ENCODE measurements at regions of chr16 and their contacts with region 1.

Region 1: DNA sequence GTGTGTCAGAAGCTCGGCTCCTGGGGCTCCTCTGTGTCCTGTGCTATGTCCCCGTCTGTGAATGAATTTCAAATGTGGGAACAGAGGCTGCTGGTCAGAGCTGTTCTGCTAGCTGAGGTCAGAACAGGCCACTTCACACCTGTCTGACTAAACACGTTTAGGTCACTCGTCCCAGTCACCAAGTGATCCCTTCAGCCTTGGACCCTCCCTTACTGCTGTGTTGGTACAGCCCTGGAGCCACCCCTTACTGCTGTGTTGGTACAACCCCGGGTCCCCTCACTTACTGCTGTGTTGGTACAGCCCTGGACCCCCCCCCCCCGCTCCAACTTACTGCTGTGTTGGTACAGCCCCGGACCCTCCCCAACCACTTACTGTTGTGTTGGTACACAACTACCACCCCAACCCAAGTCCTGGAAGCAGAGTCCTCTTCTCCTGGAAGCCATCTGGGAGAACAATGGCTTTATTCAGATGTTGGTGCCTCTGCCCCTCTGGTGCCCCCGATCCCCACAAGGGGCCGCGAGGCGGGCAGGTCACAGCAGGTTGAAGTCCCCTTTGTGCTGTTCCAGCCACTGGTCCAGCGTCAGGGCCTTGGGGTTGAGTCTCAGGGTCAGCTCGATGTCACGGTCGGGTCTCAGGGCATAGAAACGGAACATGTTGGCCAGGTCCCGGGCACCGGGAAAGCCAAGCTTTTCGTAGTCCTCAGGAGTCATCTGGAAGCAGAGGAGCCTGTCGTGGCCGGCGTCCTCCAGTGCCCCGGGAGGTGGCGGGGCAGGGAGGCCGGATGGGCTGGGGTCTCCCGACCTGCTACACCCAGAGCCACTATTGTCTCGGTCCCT is 13.0 kb downstream of the NMRAL1 start:
- DNase-seq: peak; percentile 32 to 64 (median 42)
- ATAC-seq: peak; percentile 82
- H3K4me3 ChIP-seq: no peak overlapping the region
- H3K27ac ChIP-seq: no peak overlapping the region
- H3K4me1 ChIP-seq: peaks cover 0 to 18% of the 10 kb centered on the region in 2 experiments; a peak in 2 of 5 replicates
- H3K27me3 ChIP-seq: no peaks in the 10 kb centered on the region
- CTCF ChIP-seq: no peak
- EP300 ChIP-seq: no peak
- POLR2A ChIP-seq: 0 out of 2 replicates have a peak, but pooled peaks have one; percentile 32
- RAD21 ChIP-seq: no peak

Region 2: DNA sequence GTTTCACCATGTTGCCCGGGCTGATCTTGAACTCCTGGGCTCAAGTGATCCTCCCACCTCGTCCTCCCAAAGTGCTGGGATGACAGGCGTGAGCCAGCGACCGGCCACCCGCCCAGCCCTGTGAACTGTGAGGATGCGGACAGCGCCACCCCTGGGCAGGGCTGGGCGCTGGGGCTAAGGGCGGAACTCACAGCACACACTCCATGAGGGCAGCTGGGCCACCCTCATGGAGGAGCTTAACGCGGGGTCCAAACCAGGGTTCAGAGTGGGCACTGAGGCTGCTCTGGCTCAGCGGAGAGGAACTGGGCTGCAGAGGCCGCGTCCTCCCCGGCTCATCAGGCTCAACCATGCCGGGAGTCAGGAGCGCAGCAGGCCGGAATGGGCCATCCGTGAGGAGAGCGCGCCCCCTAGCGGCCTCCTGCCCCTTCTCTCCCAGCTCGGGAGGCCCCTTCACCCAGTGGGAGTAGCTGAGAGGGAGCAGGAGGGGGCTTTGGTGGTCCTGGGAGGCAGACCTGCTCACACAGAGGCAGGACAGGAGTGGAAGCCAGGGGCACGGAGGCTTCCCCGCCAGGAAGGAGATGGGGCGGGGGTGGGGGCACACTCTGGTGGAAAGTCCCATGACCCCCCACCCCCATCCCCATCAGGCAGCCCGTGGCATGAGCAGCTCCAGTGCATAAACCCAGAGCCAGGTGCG is 58.9 kb before region 1 on chr16:
- CTCF ChIA-PET with region 1: no interaction called
- POLR2A ChIA-PET with region 1: no interaction called
- in situ Hi-C with region 1: no loop called
- intact Hi-C with region 1: no loop called
- DNase-seq: peak; percentile 84 to 90 (median 86)
- ATAC-seq: peak; percentile 94
- H3K4me3 ChIP-seq: peak overlapping the region; percentile 25; the same call in 1 of the 2 replicates
- H3K27ac ChIP-seq: no peak overlapping the region; the same call in 2 of the 3 replicates
- H3K4me1 ChIP-seq: peaks cover 0 to 29% of the 10 kb centered on the region in 2 experiments; a peak in 2 of 5 replicates
- H3K27me3 ChIP-seq: no peaks in the 10 kb centered on the region
- CTCF ChIP-seq: peak; percentile 70 to 90 (median 79)
- EP300 ChIP-seq: no peak
- POLR2A ChIP-seq: no peak
- RAD21 ChIP-seq: peak; percentile 91

Region 3: DNA sequence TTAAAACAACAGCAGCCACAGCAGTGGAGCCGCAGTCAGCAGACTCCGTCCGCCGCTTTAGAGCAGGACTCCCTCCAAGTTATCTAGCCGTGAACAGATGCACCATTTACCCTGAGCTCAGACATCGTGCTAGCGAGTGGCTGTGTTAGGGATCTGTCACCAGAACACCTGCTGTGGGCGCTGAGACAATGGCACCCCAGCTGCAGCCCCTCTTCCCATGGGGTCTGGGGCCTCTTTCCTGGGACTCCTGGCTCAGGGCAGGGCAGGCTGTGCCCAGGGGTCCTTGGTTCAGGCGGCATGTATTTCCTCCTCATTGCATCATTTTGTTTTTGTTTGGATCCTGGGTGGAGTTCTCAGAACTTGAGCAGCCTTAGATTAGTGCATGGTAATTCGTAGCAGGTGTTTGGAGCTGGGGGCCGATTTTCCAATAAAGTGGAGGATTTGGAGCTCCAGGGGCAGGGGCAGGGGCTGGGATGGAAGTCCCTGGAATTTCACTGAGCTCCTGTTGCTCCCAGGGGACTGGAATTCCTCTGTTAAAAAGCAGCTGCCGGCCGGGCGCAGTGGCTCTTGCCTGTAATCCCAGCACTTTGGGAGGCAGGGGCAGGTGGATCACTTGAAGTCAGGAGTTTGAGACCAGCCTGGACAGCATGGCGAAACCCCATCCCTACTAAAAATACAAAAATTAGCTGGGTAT is 10.4 kb before region 1 on chr16:
- CTCF ChIA-PET with region 1: interaction called, 3 read pairs
- POLR2A ChIA-PET with region 1: interaction called, 31 read pairs
- in situ Hi-C with region 1: no loop called
- intact Hi-C with region 1: no loop called
- DNase-seq: no peak
- ATAC-seq: peak; percentile 85
- H3K4me3 ChIP-seq: no peak overlapping the region
- H3K27ac ChIP-seq: peak overlapping the region; percentile 54; the same call in 1 of the 3 replicates
- H3K4me1 ChIP-seq: peaks cover 0 to 6% of the 10 kb centered on the region in 2 experiments; a peak in 1 of 5 replicates
- H3K27me3 ChIP-seq: no peaks in the 10 kb centered on the region
- CTCF ChIP-seq: no peak
- EP300 ChIP-seq: peak; percentile 39; the same call in 1 of the 2 replicates
- POLR2A ChIP-seq: no peak
- RAD21 ChIP-seq: 0 out of 4 replicates have a peak, but pooled peaks of 1 of the 2 experiments have one; percentile 18

Region 4: GRCh38 chr16:4679850-4680636 is 218.6 kb after region 1 on chr16:
- CTCF ChIA-PET with region 1: no interaction called
- POLR2A ChIA-PET with region 1: no interaction called
- in situ Hi-C with region 1: no loop called
- intact Hi-C with region 1: no loop called
- DNase-seq: no peak
- ATAC-seq: no peak
- H3K4me3 ChIP-seq: no peak overlapping the region
- H3K27ac ChIP-seq: no peak overlapping the region
- H3K4me1 ChIP-seq: peaks cover 0 to 65% of the 10 kb centered on the region in 2 experiments; a peak in 2 of 5 replicates
- H3K27me3 ChIP-seq: no peaks in the 10 kb centered on the region
- CTCF ChIP-seq: no peak
- EP300 ChIP-seq: no peak
- POLR2A ChIP-seq: no peak
- RAD21 ChIP-seq: no peak